Right ventricle myocardium superior (tissue), 1 donor: ENCODE measurements at regions of chr12 and their contacts with region 1.

Region 1: GRCh38 chr12:51341259-51342007 is 5.0 kb downstream of the CELA1 start:
- DNase-seq: peak; percentile 56
- ATAC-seq: peak; percentile 95

Region 2: DNA sequence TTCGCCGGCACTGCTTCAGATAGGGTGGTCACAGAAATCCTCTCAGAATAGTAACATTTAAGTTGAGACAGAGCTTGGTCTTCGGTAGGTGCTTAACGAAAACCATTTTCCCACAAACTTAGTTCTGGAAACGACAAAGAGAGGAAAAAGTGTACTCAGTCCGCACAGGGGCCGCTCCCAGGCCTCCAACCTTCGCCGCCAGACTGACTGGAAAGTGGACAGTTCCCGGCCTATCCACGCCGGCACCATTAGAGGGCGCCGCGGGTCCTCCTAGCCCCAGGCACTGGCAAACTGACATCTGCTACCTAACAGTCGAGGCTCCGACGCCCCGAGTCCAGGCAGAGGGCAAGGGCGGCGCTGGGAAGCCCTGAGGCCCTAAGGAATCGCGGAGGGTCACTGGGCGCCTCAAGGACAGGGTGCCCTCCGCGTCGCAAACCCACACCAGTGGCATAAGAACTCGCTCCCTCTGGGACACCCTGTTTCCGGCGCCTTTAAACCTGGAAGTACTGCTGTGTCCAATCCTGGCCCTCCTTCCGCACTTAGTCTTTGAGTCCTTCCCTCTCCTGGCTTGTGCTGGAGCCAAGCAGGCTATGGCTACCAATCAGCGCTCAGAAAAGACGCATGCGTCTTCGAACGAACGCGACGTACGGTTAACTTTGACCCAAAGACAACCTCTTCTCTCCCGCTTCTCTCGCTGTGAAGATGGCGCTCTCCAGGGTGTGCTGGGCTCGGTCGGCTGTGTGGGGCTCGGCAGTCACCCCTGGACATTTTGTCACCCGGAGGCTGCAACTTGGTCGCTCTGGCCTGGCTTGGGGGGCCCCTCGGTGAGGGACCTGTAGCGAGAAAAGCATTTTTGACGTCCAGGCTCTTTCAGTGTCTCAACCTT is 293.5 kb before region 1 on chr12 and contains the start of gene LETMD1:
- intact Hi-C with region 1: loop called (anchors 2 kb)
- DNase-seq: peak; percentile 94
- ATAC-seq: peak; percentile 100
- total RNA-seq, gene LETMD1: 19.7 TPM

Region 3: DNA sequence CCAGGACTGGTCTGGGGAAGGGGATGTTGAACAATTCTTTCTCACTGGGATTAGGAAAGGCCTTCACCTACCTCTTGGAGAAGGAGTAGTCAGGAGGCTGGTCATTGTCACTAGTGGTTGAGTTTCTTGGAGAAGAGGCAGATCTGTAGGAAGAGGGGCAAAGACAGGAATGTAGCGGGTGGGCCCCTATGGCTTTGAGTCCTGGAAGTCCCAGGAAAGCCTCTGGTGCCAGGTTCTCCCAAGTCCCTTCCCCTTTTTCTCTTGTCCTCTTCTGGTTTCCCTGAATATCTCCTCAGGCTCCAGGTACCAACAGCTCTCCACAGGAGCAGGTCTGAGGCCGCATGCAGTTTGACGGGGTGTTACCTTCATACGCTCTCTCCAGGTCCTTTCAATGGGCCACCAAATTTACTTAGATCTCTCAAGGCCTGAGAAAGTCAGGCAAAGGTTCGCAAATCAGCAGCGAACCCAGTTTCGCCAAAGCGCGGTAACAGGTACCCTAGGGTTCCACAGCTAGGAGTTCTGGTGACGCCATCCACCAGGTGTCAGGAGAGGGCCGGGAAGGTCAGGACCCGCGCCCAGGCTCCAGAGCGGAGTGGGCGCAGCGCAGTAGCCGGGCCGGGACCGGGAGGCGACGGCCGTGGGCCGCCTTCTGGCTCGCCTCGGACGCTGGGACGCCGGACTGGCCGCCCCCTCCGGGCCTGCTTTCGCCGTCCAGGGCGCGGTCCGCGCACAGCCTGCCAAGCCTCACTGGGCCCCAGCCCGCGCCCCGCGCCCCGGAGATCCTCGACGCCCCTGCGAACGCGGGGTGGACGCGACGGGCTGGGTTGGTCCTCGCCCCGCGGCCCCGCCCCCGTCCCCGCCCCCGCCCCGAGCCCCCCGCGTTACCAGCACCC is 72.0 kb before region 1 on chr12:
- intact Hi-C with region 1: loop called (anchors 10 kb)
- DNase-seq: peak; percentile 57
- ATAC-seq: peak; percentile 52

Region 4: DNA sequence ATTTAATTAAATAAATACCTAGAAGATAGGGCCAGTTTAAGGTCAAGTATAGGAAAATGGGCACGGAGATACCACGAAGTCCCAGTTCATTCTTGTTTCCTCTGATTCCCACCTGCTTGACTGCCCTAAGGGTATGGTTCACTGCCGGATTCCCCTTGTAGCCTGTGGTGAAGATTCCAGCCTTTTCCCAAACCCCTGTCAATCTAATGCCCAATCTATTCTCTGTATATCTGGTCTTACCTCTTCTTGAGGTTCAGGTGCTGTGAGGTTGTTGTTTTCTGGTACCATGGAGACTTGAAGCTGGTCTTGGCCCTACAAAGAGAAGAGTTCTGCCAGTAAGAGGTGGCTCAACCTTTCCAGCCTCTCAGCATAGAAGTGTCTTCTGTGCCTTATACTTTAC is 57.0 kb before region 1 on chr12:
- intact Hi-C with region 1: no loop called
- DNase-seq: no peak
- ATAC-seq: no peak